GM12878 (cell line): ENCODE measurements at regions of chr18 and their contacts with region 1.

Region 1: DNA sequence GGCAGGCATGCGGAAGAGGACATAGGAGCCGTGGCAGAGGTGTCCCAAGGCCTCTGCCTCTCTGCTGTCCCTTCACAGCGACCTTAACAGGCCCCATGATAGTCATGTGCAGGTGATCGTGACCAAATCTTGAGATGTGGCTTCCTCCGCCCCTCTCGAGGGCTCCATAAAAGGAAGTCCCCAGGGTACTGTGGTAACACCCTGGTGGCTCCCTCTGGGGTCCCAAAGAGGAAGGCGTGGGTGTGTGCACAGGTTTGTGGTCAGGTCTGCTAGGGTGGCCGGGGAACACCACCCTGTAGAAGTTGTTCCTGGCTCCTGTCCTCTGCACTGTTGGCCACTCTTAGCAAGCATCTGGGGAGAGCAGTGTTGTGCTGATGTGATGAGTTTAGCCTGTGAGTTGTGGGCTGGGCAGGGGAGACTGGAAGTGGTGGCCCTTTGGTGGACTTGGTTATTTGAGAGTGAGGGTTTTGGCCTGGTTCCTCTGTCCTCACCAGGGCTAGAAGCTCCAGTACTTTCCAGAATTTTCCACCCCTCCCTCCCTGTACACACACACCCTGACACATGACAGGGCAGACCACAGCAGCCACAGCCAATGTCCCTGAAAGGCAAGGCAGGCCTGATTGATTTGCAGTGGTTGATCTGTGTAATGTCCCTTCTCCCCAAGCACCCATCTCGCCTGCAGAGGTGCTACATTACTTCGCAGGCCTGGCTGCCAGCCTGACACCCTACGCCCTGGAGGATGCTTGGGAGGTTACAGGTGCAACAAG is 68.9 kb upstream of the BOD1L2 start:
- DNase-seq: peak; percentile 93
- ATAC-seq: peak; percentile 90
- H3K4me3 ChIP-seq: no peak overlapping the region
- H3K27ac ChIP-seq: peak overlapping the region; percentile 28; the same call in 1 of the 2 replicates
- H3K4me1 ChIP-seq: peaks cover 25% of the 10 kb centered on the region
- H3K27me3 ChIP-seq: no peaks in the 10 kb centered on the region; a peak in 1 of 4 replicates
- CTCF ChIP-seq: peak; percentile 14 to 38 (median 30); a peak in 3 of 6 replicates
- EP300 ChIP-seq: peak; percentile 89 to 92
- POLR2A ChIP-seq: no peak
- RAD21 ChIP-seq: peak; percentile 28; the same call in 1 of the 2 replicates

Region 2: GRCh38 chr18:57023275-57023882 is 54.6 kb before region 1 on chr18:
- CTCF ChIA-PET with region 1: no interaction called
- POLR2A ChIA-PET with region 1: no interaction called
- RAD21 ChIA-PET with region 1: interaction called, 3 read pairs
- SMC1A ChIA-PET with region 1: interaction called, 6 read pairs
- in situ Hi-C with region 1: no loop called
- intact Hi-C with region 1: loop called (anchors 2 kb)
- DNase-seq: peak; percentile 55
- ATAC-seq: peak; percentile 92
- H3K4me3 ChIP-seq: 0 out of 2 replicates have a peak overlapping the region, but pooled peaks have one; percentile 5
- H3K27ac ChIP-seq: no peak overlapping the region
- H3K4me1 ChIP-seq: no peaks in the 10 kb centered on the region; the same call in 1 of the 2 replicates
- H3K27me3 ChIP-seq: no peaks in the 10 kb centered on the region
- CTCF ChIP-seq: no peak
- EP300 ChIP-seq: peak in 1 of 2 experiments; percentile 46; a peak in 1 of 4 replicates
- POLR2A ChIP-seq: no peak
- RAD21 ChIP-seq: no peak

Region 3: GRCh38 chr18:57060814-57061213 is 17.2 kb before region 1 on chr18:
- CTCF ChIA-PET with region 1: interaction called, 4 read pairs
- POLR2A ChIA-PET with region 1: no interaction called
- RAD21 ChIA-PET with region 1: interaction called, 3 read pairs
- SMC1A ChIA-PET with region 1: interaction called, 5 read pairs
- in situ Hi-C with region 1: no loop called
- intact Hi-C with region 1: loop called (anchors 2 kb)
- DNase-seq: no peak
- ATAC-seq: no peak
- H3K4me3 ChIP-seq: no peak overlapping the region
- H3K27ac ChIP-seq: no peak overlapping the region
- H3K4me1 ChIP-seq: no peaks in the 10 kb centered on the region
- H3K27me3 ChIP-seq: peaks cover 0 to 4% of the 10 kb centered on the region in 2 experiments; a peak in 1 of 4 replicates
- CTCF ChIP-seq: no peak
- EP300 ChIP-seq: no peak
- POLR2A ChIP-seq: no peak
- RAD21 ChIP-seq: no peak